ENCODE measurements at regions of chr19 and their contacts with region 1.

Region 1: DNA sequence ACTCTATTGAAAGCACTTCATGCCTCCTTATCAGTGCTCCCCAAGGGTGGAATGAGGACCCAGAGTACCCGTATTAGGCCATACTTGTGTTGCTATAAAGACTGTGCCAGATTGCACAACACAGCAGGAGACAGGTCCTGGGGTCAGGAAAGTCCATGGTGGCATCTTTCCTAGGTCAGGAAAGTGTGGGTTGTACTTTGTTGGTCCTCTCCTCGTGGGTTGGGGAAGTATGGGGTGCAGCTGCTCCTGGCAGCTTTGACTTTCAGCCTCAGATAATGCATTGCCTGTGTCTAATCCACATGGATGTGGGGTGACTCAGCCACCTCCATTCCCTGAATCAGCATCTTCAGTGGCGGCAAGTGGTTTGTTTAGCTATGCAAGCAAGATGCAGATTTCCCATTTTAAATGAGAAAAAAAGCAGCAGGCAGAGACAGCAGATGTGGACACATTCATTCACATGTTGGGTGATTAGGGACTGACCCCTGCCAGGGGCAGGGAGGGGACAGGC is 8.4 kb upstream of the CYP2B6 start:
- DNase-seq: no peak
- H3K4me3 ChIP-seq: no peak overlapping the region
- H3K27ac ChIP-seq: no peak overlapping the region
- H3K4me1 ChIP-seq: peaks cover 0 to 3% (median 0%) of the 10 kb centered on the region in 4 donors
- H3K27me3 ChIP-seq: peaks cover 0 to 34% (median 0%) of the 10 kb centered on the region in 3 donors
- CTCF ChIP-seq: no peak
- EP300 ChIP-seq: no peak
- POLR2A ChIP-seq: no peak

Region 2: GRCh38 chr19:41144403-41144802 is 161.8 kb after region 1 on chr19:
- intact Hi-C with region 1: loop called (anchors 5 kb)
- DNase-seq: peak; percentile 86 to 89
- H3K4me3 ChIP-seq: no peak overlapping the region
- H3K27ac ChIP-seq: no peak overlapping the region
- H3K4me1 ChIP-seq: no peaks in the 10 kb centered on the region
- H3K27me3 ChIP-seq: peaks cover 0 to 20% (median 0%) of the 10 kb centered on the region in 3 donors
- CTCF ChIP-seq: peak in 5 of 7 experiments; percentile 61 to 88 (median 81)
- EP300 ChIP-seq: no peak
- POLR2A ChIP-seq: no peak

Measured in stomach (tissue), 19 donors.